PC-9 (cell line): ENCODE measurements at regions of chr1 and their contacts with region 1.

Region 1: GRCh38 chr1:176157995-176158394 is 49.1 kb downstream of the COP1 start:
- DNase-seq: no peak
- H3K4me3 ChIP-seq: no peak overlapping the region
- H3K27ac ChIP-seq: no peak overlapping the region
- H3K4me1 ChIP-seq: no peaks in the 10 kb centered on the region
- H3K27me3 ChIP-seq: no peaks in the 10 kb centered on the region
- CTCF ChIP-seq: no peak

Region 2: GRCh38 chr1:175555266-175555665 is 602.7 kb before region 1 on chr1:
- CTCF ChIA-PET with region 1: no interaction called
- POLR2A ChIA-PET with region 1: no interaction called
- intact Hi-C with region 1: no loop called
- DNase-seq: no peak
- H3K4me3 ChIP-seq: no peak overlapping the region
- H3K27ac ChIP-seq: no peak overlapping the region
- H3K4me1 ChIP-seq: no peaks in the 10 kb centered on the region
- H3K27me3 ChIP-seq: no peaks in the 10 kb centered on the region
- CTCF ChIP-seq: no peak

Region 3: GRCh38 chr1:176046926-176047325 is 111.1 kb before region 1 on chr1:
- CTCF ChIA-PET with region 1: no interaction called
- POLR2A ChIA-PET with region 1: no interaction called
- intact Hi-C with region 1: no loop called
- DNase-seq: no peak
- H3K4me3 ChIP-seq: no peak overlapping the region
- H3K27ac ChIP-seq: no peak overlapping the region
- H3K4me1 ChIP-seq: no peaks in the 10 kb centered on the region
- H3K27me3 ChIP-seq: no peaks in the 10 kb centered on the region
- CTCF ChIP-seq: no peak

Region 4: GRCh38 chr1:176136891-176137290 is 21.1 kb before region 1 on chr1:
- CTCF ChIA-PET with region 1: no interaction called
- POLR2A ChIA-PET with region 1: interaction called, 11 read pairs
- intact Hi-C with region 1: no loop called
- DNase-seq: no peak
- H3K4me3 ChIP-seq: no peak overlapping the region
- H3K27ac ChIP-seq: no peak overlapping the region
- H3K4me1 ChIP-seq: no peaks in the 10 kb centered on the region
- H3K27me3 ChIP-seq: no peaks in the 10 kb centered on the region
- CTCF ChIP-seq: no peak